ENCODE measurements at regions of chr2 and their contacts with region 1.

Region 1: GRCh38 chr2:165239230-165239629 is at the start of gene SCN2A:
- DNase-seq: peak; percentile 64
- H3K4me3 Mint-ChIP-seq: no peak within 1 kb of the TSS
- H3K27ac Mint-ChIP-seq: no peak within 1 kb of the TSS
- H3K4me1 Mint-ChIP-seq: no peaks in the 10 kb centered on the region
- H3K27me3 Mint-ChIP-seq: no peaks in the 10 kb centered on the region
- total RNA-seq, gene SCN2A: not detected in 2 replicates

Region 2: DNA sequence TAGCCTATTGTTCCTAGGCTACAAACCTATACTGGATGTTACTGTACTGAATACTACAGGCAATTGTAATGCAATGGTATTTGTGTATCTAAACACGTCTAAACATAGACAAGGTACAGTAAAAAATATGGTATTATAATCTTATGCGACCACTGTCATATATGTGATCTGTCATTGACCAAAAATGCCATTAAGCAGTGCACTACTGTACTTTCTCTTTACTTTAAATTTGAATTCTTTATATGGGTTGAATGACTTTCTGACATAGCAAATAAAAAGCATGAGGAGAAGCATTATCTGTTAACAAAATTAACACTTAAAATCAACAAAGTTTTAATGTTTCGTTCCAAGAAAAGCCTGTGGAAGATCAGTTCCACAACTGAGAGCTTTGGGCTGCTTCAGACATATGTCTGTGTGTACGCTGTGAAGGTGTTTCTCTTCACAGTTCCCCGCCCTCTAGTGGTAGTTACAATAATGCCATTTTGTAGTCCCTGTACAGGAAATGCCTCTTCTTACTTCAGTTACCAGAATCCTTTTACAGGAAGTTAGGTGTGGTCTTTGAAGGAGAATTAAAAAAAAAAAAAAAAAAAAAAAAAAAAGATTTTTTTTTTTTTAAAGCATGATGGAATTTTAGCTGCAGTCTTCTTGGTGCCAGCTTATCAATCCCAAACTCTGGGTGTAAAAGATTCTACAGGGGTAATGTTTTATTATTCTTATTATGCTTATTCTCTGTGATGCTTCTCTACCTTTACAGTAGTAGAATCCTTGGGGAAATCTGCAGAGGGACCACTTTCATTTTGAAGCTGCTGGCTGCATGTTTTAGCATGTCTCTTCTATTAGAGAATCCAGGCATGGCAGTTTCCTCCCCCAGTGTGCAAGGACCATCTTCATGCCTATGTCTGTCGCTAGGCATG is 54.5 kb after region 1 on chr2:
- intact Hi-C with region 1: loop called (anchors 1 kb)
- DNase-seq: peak; percentile 90
- H3K4me3 Mint-ChIP-seq: no peak overlapping the region
- H3K27ac Mint-ChIP-seq: no peak overlapping the region
- H3K4me1 Mint-ChIP-seq: peaks cover 2% of the 10 kb centered on the region
- H3K27me3 Mint-ChIP-seq: peaks cover 12% of the 10 kb centered on the region

Region 3: DNA sequence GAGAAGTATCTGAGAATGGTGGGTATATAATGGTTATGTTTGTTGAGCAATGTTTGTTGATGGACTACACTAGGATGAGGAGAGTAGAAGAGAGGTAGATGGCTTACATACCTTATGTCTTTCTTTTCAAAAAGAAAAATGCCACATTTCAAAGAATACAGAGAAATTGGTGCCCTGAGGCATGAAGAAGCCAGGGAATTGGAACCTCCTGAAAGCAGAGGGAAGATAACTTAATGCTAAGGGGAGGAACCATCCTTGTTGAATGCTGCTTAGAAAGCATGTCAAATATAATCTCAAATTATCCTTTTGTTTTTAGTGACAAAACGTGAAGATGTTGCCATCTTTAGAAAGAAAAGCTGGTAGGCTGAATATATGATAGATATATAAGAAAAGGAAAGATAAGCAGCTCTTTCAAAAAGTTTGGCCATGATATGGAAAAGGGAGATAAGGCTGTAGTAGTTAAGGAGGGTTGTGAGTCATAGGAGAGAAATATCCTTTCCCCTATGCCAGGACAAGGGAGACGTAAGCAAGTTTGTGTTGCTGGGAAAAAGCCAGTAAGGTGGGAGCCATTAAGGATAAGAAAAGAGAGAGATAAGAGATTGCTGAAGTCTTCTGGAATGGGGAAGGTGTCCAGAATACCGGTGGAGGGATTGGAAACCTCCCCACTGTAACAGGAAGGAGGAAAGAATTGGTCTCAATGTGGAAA is 66.3 kb after region 1 on chr2:
- intact Hi-C with region 1: loop called (anchors 5 kb)
- DNase-seq: no peak
- H3K4me3 Mint-ChIP-seq: no peak overlapping the region
- H3K27ac Mint-ChIP-seq: no peak overlapping the region
- H3K4me1 Mint-ChIP-seq: no peaks in the 10 kb centered on the region
- H3K27me3 Mint-ChIP-seq: no peaks in the 10 kb centered on the region

Measured in activated CD4-positive, alpha-beta T cell treated with anti-CD3 and anti-CD28 coated beads, Interleukin-2, amount 10 ng/mL, durations not matched to agents 24 days and 14 days (primary cell).